PC-3 (cell line): ENCODE measurements at regions of chr10 and their contacts with region 1.

Region 1: DNA sequence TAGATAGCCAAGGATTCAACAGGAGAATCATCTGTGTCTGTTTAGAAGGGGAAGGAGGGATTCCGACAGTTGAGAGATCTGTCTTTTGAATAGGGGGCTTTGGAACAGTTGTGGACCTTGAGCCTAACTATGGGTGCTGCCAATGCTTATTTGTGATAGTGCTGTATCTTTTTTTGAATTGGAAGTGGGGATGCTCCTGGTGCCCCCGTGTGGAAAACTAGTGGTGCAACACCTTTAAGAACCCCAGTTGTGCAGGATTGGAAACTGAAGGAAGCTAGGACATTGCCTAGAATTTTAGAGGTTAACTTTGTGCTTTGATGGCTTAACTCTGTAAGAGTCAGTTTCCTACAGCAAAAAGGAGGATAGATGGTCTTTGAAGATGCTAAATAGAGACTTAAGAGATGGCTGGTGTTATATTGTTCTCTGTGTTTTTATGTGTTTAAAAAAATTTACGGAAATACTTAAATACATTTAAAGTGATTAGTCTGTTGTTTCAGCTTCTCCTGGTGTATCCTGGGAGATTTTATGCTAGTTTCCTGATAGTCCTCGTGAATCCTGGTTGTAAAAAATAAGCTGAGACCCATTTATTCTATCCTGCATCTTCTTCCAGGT is 69.3 kb downstream of the AP3M1 start:
- DNase-seq: peak; percentile 94
- ATAC-seq: peak; percentile 49
- H3K4me3 ChIP-seq: no peak overlapping the region
- H3K27ac ChIP-seq: no peak overlapping the region
- H3K4me1 ChIP-seq: peaks cover 43% of the 10 kb centered on the region
- H3K27me3 ChIP-seq: no peaks in the 10 kb centered on the region
- CTCF ChIP-seq: no peak

Region 2: DNA sequence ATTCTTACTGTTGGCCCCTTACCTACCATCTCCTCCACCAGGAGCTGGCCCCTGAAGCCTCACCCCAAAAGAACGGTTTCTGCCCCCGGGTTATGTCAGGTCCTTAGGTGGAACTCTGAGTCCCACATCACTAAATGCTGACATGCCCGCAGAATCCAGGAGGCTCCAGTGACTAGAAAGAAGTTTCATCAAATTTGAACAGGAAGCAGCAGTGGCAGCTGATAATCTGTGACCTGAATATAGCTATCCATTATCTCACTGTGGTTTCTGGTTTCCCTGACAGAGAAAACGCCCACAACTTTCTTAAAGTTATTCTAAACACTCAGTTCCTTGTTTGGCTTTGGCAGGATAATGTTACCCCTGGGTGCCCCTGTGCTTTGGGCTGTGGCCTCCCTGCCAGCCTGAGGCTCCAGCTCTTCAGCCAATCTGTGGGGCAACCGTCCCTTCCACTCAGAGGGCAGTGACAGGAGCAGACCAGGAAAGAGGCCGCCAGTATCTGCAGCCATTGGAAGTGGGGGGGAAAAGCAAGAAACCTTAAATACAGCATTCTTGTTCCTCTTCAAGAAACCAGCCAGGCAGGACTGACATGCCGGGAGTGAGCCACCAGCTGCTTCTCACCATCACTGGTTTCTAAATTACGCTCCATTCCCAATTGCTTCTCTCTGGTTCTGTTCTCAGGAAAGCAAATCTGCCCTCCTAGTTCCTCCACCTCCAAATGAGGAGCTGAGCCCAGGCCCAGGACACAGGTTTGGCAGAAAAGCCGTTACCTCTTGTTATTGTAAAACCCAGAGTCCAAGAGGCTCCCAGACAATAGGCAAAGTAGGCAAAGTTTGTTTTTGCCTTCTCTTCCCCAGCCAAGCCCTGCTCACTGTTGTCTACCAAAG is 124.6 kb before region 1 on chr10:
- CTCF ChIA-PET with region 1: interaction called, 4 read pairs
- POLR2A ChIA-PET with region 1: no interaction called
- intact Hi-C with region 1: loop called (anchors 1 kb)
- DNase-seq: peak; percentile 67
- ATAC-seq: peak; percentile 39
- H3K4me3 ChIP-seq: no peak overlapping the region
- H3K27ac ChIP-seq: no peak overlapping the region
- H3K4me1 ChIP-seq: peaks cover 11% of the 10 kb centered on the region
- H3K27me3 ChIP-seq: no peaks in the 10 kb centered on the region
- CTCF ChIP-seq: no peak

Region 3: GRCh38 chr10:74008212-74008731 is 73.0 kb before region 1 on chr10:
- CTCF ChIA-PET with region 1: interaction called, 7 read pairs
- POLR2A ChIA-PET with region 1: interaction called, 4 read pairs
- intact Hi-C with region 1: loop called (anchors 1 kb)
- DNase-seq: peak; percentile 98
- ATAC-seq: peak; percentile 80
- H3K4me3 ChIP-seq: peak overlapping the region; percentile 1; the same call in 1 of the 2 replicates
- H3K27ac ChIP-seq: peak overlapping the region; percentile 54
- H3K4me1 ChIP-seq: peaks cover 68% of the 10 kb centered on the region
- H3K27me3 ChIP-seq: no peaks in the 10 kb centered on the region
- CTCF ChIP-seq: 0 out of 2 replicates have a peak, but pooled peaks have one; percentile 17

Region 4: GRCh38 chr10:74058658-74059057 is 22.6 kb before region 1 on chr10:
- CTCF ChIA-PET with region 1: interaction called, 18 read pairs
- POLR2A ChIA-PET with region 1: interaction called, 3 read pairs
- intact Hi-C with region 1: loop called (anchors 1 kb)
- DNase-seq: peak; percentile 77
- ATAC-seq: no peak
- H3K4me3 ChIP-seq: no peak overlapping the region; the same call in 1 of the 2 replicates
- H3K27ac ChIP-seq: peak overlapping the region; percentile 71
- H3K4me1 ChIP-seq: peaks cover 55% of the 10 kb centered on the region
- H3K27me3 ChIP-seq: no peaks in the 10 kb centered on the region
- CTCF ChIP-seq: peak; percentile 75

Region 5: GRCh38 chr10:74145133-74145532 is 63.8 kb after region 1 on chr10:
- CTCF ChIA-PET with region 1: no interaction called
- POLR2A ChIA-PET with region 1: no interaction called
- intact Hi-C with region 1: no loop called
- DNase-seq: peak; percentile 52
- ATAC-seq: peak; percentile 22
- H3K4me3 ChIP-seq: no peak overlapping the region
- H3K27ac ChIP-seq: no peak overlapping the region
- H3K4me1 ChIP-seq: peaks cover 15% of the 10 kb centered on the region
- H3K27me3 ChIP-seq: no peaks in the 10 kb centered on the region
- CTCF ChIP-seq: no peak